ENCODE measurements at regions of chr2 and their contacts with region 1.

Region 1: DNA sequence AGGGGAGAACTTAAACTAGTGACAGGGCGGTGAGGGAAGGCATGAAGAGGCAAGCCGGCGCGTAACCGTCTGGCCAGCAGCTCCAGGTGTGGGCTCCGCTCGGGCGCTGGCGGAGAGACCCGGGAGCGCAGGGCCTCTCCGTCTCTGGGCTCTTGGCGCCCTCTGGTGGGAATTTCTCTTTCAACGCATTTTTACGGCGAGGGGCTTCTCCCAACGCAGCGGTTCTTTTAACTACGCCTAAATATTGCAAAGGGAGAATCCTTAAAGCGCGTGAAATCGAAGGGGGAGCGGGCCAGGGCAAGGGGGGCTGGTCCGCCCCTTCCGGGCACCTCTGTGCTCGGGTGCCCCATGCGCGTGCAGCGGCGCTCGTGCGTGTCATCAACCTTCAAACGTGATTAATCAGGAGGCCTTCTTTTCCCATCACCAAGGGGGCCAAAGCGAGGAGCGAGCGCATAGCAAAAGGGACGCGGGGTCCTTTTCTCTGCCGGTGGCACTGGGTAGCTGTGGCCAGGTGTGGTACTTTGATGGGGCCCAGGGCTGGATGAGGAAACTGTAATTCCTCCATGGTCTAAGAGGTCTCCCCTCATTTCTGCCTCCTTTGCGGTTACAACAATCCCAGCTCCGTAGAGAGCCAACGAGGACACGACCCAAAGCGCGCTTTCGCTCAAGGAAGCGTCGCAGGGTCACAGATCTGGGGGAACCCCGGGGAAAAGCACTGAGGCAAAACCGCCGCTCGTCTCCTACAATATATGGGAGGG is 762 bp upstream of the GAD1 start:
- DNase-seq: peak; percentile 21
- ATAC-seq: 0 out of 2 replicates have a peak, but pooled peaks have one; percentile 35
- H3K4me3 ChIP-seq: no peak overlapping the region
- H3K27ac ChIP-seq: no peak overlapping the region
- H3K4me1 ChIP-seq: peaks cover 1% of the 10 kb centered on the region; the same call in 1 of the 2 replicates
- H3K27me3 ChIP-seq: peaks cover 76% of the 10 kb centered on the region
- CTCF ChIP-seq: peak; percentile 71
- POLR2A ChIP-seq: no peak
- RAD21 ChIP-seq: peak; percentile 72

Region 2: GRCh38 chr2:169438460-169439072 is 1377.4 kb before region 1 on chr2:
- CTCF ChIA-PET with region 1: no interaction called
- POLR2A ChIA-PET with region 1: no interaction called
- dilution Hi-C with region 1: no loop called
- in situ Hi-C with region 1: loop called (anchors 25 kb)
- intact Hi-C with region 1: no loop called
- DNase-seq: no peak
- ATAC-seq: no peak
- H3K4me3 ChIP-seq: no peak overlapping the region
- H3K27ac ChIP-seq: no peak overlapping the region
- H3K4me1 ChIP-seq: no peaks in the 10 kb centered on the region
- H3K27me3 ChIP-seq: no peaks in the 10 kb centered on the region
- CTCF ChIP-seq: no peak
- POLR2A ChIP-seq: no peak
- RAD21 ChIP-seq: no peak

Region 3: GRCh38 chr2:169933124-169933711 is 882.7 kb before region 1 on chr2:
- CTCF ChIA-PET with region 1: no interaction called
- POLR2A ChIA-PET with region 1: no interaction called
- dilution Hi-C with region 1: no loop called
- in situ Hi-C with region 1: loop called (anchors 25 kb)
- intact Hi-C with region 1: loop called (anchors 10 kb)
- DNase-seq: peak; percentile 54
- ATAC-seq: peak; percentile 89
- H3K4me3 ChIP-seq: no peak overlapping the region
- H3K27ac ChIP-seq: no peak overlapping the region
- H3K4me1 ChIP-seq: no peaks in the 10 kb centered on the region
- H3K27me3 ChIP-seq: no peaks in the 10 kb centered on the region
- CTCF ChIP-seq: peak; percentile 75
- POLR2A ChIP-seq: no peak
- RAD21 ChIP-seq: peak; percentile 74

Region 4: GRCh38 chr2:170235860-170236679 is 579.9 kb before region 1 on chr2:
- CTCF ChIA-PET with region 1: no interaction called
- POLR2A ChIA-PET with region 1: no interaction called
- dilution Hi-C with region 1: no loop called
- in situ Hi-C with region 1: no loop called
- intact Hi-C with region 1: loop called (anchors 1 kb)
- DNase-seq: peak; percentile 54
- ATAC-seq: peak; percentile 69; the same call in 1 of the 2 replicates
- H3K4me3 ChIP-seq: no peak overlapping the region
- H3K27ac ChIP-seq: no peak overlapping the region
- H3K4me1 ChIP-seq: no peaks in the 10 kb centered on the region
- H3K27me3 ChIP-seq: peaks cover 14% of the 10 kb centered on the region
- CTCF ChIP-seq: peak; percentile 61
- POLR2A ChIP-seq: no peak
- RAD21 ChIP-seq: peak; percentile 64

Region 5: DNA sequence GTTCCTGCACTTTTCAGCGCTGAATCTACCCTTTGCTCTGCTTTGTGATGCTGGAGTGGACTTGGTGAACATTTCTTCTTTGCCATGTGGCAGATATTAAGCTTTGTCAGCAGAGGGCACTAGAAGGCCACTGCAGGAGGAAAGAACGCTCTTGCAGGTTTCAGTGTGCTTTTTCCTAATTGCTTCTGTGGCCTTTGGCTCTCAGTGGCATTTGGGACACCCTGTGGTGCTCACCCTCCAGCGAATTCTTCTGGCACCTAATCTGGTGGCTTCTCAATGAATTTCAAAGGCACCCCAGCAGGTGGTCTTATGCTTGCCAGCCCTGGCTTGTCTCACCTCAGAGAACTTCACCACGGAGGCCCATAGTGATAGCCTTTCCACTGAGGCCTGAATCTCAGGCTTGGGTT is 491.3 kb before region 1 on chr2:
- CTCF ChIA-PET with region 1: interaction called, 3 read pairs
- POLR2A ChIA-PET with region 1: no interaction called
- dilution Hi-C with region 1: no loop called
- in situ Hi-C with region 1: no loop called
- intact Hi-C with region 1: loop called (anchors 1 kb)
- DNase-seq: peak; percentile 37
- ATAC-seq: peak; percentile 85
- H3K4me3 ChIP-seq: no peak overlapping the region
- H3K27ac ChIP-seq: no peak overlapping the region
- H3K4me1 ChIP-seq: no peaks in the 10 kb centered on the region
- H3K27me3 ChIP-seq: peaks cover 2% of the 10 kb centered on the region; the same call in 1 of the 2 replicates
- CTCF ChIP-seq: peak; percentile 60
- POLR2A ChIP-seq: no peak
- RAD21 ChIP-seq: peak; percentile 56

Region 6: GRCh38 chr2:170369894-170370293 is 446.0 kb before region 1 on chr2:
- CTCF ChIA-PET with region 1: interaction called, 11 read pairs
- POLR2A ChIA-PET with region 1: no interaction called
- dilution Hi-C with region 1: no loop called
- in situ Hi-C with region 1: loop called (anchors 10 kb)
- intact Hi-C with region 1: loop called (anchors 2 kb)
- DNase-seq: peak; percentile 11
- ATAC-seq: peak; percentile 35; the same call in 1 of the 2 replicates
- H3K4me3 ChIP-seq: no peak overlapping the region
- H3K27ac ChIP-seq: no peak overlapping the region
- H3K4me1 ChIP-seq: no peaks in the 10 kb centered on the region
- H3K27me3 ChIP-seq: peaks cover 7% of the 10 kb centered on the region
- CTCF ChIP-seq: peak; percentile 36
- POLR2A ChIP-seq: no peak
- RAD21 ChIP-seq: 0 out of 2 replicates have a peak, but pooled peaks have one; percentile 4

Region 7: DNA sequence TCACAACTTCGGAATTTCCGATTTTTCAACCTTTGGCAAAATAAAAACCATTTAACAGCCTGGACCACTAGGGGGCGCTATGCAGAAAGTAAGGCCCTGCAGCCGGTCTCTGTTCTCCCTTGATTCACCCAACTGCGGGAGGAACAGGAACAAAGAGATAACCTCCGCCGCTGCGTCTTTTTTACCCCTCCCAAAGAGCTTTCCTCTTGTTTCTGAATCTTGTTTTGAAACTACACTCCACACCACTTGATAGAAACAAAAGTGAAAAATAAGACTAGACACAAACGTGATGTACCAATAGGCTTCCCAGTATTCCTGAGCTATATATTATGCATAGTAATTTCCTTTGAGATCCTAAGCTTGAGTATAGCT is 406.8 kb before region 1 on chr2:
- CTCF ChIA-PET with region 1: interaction called, 5 read pairs
- POLR2A ChIA-PET with region 1: no interaction called
- dilution Hi-C with region 1: loop called (anchors 25 kb)
- in situ Hi-C with region 1: loop called (anchors 10 kb)
- intact Hi-C with region 1: loop called (anchors 1 kb)
- DNase-seq: peak; percentile 61
- ATAC-seq: peak; percentile 62
- H3K4me3 ChIP-seq: no peak overlapping the region
- H3K27ac ChIP-seq: no peak overlapping the region
- H3K4me1 ChIP-seq: no peaks in the 10 kb centered on the region
- H3K27me3 ChIP-seq: no peaks in the 10 kb centered on the region; the same call in 1 of the 2 replicates
- CTCF ChIP-seq: peak; percentile 76
- POLR2A ChIP-seq: no peak
- RAD21 ChIP-seq: peak; percentile 66

Region 8: DNA sequence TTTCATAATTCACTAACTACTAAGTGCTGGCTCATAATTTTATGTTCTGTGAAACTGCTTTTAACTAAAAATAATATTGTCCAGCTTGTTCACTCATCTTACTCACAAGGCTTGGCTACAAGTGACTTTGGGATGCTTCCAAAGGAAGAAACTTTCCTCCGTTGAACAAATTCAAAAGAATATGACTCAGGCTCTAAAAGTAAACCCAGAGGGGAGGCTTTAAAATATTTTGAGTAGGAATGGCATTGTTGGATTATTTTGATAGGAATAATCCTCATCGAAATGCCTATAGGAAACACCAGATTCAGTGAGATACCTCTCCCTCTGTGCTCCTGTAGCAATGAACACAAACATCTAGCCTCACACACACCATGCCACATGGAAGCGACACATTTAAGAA is 370.0 kb after region 1 on chr2:
- CTCF ChIA-PET with region 1: no interaction called
- POLR2A ChIA-PET with region 1: no interaction called
- dilution Hi-C with region 1: no loop called
- in situ Hi-C with region 1: no loop called
- intact Hi-C with region 1: no loop called
- DNase-seq: peak; percentile 87
- ATAC-seq: peak; percentile 81
- H3K4me3 ChIP-seq: no peak overlapping the region
- H3K27ac ChIP-seq: peak overlapping the region; percentile 67; the same call in 1 of the 2 replicates
- H3K4me1 ChIP-seq: peaks cover 8% of the 10 kb centered on the region
- H3K27me3 ChIP-seq: no peaks in the 10 kb centered on the region
- CTCF ChIP-seq: no peak
- POLR2A ChIP-seq: no peak
- RAD21 ChIP-seq: no peak

Measured in IMR-90 (cell line).